Posterior vena cava (tissue), 2 donors: ENCODE measurements at regions of chr7 and their contacts with region 1.

Region 1: GRCh38 chr7:4809091-4809591 is 33.7 kb downstream of the AP5Z1 start:
- DNase-seq: no peak

Region 2: GRCh38 chr7:4861673-4862072 is 52.5 kb after region 1 on chr7 and contains the start of gene PAPOLB:
- intact Hi-C with region 1: loop called in 1 of 2 experiments (anchors 10 kb)
- DNase-seq: no peak
- total RNA-seq, gene PAPOLB: 0.19 to 0.24 TPM

Region 3: GRCh38 chr7:4878336-4879335 is 69.5 kb after region 1 on chr7:
- intact Hi-C with region 1: loop called in 1 of 2 experiments (anchors 10 kb)
- DNase-seq: peak; percentile 75